OCI-LY7 (cell line): ENCODE measurements at regions of chr5 and their contacts with region 1.

Region 1: GRCh38 chr5:101942321-101943215 is 353.5 kb downstream of the SLCO4C1 start:
- DNase-seq: peak; percentile 35
- H3K4me3 ChIP-seq: no peak overlapping the region
- H3K27ac ChIP-seq: no peak overlapping the region
- H3K4me1 ChIP-seq: peaks cover 8% of the 10 kb centered on the region
- CTCF ChIP-seq: peak; percentile 80

Region 2: DNA sequence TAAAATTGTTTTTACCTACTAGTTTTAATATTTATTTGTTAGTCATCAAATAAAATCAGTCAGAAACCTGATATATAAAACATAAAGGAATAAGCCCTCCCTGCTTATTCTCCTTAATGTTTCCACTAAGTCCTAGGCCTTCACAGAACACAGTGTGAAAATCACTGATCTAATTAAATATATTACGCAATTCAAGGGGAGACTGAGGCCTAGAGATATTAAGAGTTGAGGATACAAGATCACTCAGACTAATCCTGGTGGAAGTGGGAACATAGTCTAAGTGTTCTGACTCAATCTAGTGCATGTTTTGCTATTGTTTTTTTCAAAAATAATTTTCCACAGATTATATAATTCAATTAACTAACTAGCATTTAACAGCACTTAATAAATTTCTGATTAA is 47.6 kb before region 1 on chr5:
- CTCF ChIA-PET with region 1: no interaction called
- POLR2A ChIA-PET with region 1: no interaction called
- intact Hi-C with region 1: no loop called
- DNase-seq: no peak
- H3K4me3 ChIP-seq: no peak overlapping the region
- H3K27ac ChIP-seq: no peak overlapping the region
- H3K4me1 ChIP-seq: peaks cover 5% of the 10 kb centered on the region
- CTCF ChIP-seq: no peak

Region 3: DNA sequence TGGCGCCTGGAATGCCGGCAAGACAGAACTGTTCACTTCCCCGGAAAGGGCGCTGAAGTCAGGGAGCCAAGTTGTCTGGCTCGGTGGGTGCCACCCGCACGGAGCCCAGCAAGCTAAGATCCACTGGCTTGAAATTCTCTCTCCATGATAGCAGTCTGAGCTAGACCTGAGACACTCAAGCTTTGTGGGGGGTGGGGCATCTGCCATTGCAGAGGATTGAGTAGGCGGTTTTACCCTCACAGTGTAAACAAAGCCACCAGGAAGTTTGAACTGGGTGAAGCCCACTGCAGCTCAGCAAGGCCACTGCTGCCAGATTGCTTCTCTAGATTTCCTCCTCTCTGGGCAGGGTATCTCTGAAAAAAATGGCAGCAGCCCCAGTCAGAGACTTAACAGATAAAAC is 76.1 kb after region 1 on chr5:
- CTCF ChIA-PET with region 1: no interaction called
- POLR2A ChIA-PET with region 1: no interaction called
- intact Hi-C with region 1: no loop called
- DNase-seq: no peak
- H3K4me3 ChIP-seq: no peak overlapping the region
- H3K27ac ChIP-seq: no peak overlapping the region
- H3K4me1 ChIP-seq: no peaks in the 10 kb centered on the region
- CTCF ChIP-seq: no peak

Region 4: GRCh38 chr5:102069974-102070373 is 127.4 kb after region 1 on chr5:
- CTCF ChIA-PET with region 1: no interaction called
- POLR2A ChIA-PET with region 1: no interaction called
- intact Hi-C with region 1: no loop called
- DNase-seq: no peak
- H3K4me3 ChIP-seq: no peak overlapping the region
- H3K27ac ChIP-seq: no peak overlapping the region
- H3K4me1 ChIP-seq: no peaks in the 10 kb centered on the region
- CTCF ChIP-seq: no peak

Region 5: GRCh38 chr5:102223542-102224477 is 281.2 kb after region 1 on chr5:
- CTCF ChIA-PET with region 1: no interaction called
- POLR2A ChIA-PET with region 1: no interaction called
- intact Hi-C with region 1: loop called (anchors 5 kb)
- DNase-seq: peak; percentile 50
- H3K4me3 ChIP-seq: no peak overlapping the region
- H3K27ac ChIP-seq: no peak overlapping the region
- H3K4me1 ChIP-seq: no peaks in the 10 kb centered on the region
- CTCF ChIP-seq: peak; percentile 88